Activated naive CD4-positive, alpha-beta T cell treated with anti-CD3 and anti-CD28 coated beads for 36 hours (primary cell): ENCODE measurements at regions of chr1 and their contacts with region 1.

Region 1: DNA sequence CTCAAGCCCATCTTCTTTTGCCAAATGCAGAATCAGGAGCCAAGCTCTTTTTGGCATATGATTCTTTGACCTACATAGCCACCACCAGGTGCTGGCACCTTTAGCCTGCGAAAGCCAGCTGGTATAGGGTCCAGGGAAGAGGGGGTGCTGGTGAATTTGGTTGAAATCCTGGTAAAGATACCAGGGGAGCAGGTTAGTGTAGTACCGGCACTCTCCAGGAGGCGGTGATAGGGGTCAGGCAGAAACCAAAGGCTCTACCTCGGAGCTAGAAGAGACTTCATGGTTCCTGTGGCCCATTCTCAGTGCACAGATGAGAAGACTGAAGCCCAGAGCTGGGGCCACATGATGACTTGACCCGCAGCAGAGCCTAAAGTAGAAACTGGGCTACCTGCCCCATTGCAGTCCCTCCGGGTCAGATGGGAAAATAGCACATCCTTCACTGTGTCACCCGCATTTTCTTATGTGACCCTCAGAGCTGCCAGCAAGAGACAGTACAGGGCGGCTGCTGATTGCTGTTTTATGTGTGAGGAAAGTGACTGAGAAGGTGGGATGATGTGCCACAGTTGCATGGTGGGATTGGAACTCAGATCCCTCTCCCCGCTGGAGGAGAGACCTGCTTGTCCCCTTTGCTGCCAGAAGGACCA is 36.0 kb upstream of the IL19 start:
- DNase-seq: peak; percentile 88
- H3K4me3 Mint-ChIP-seq: no peak overlapping the region
- H3K27ac Mint-ChIP-seq: no peak overlapping the region
- H3K4me1 Mint-ChIP-seq: peaks cover 53% of the 10 kb centered on the region
- H3K27me3 Mint-ChIP-seq: no peaks in the 10 kb centered on the region

Region 2: GRCh38 chr1:206459703-206460102 is 274.9 kb before region 1 on chr1:
- CTCF ChIA-PET with region 1: no interaction called
- intact Hi-C with region 1: no loop called
- DNase-seq: no peak
- H3K4me3 Mint-ChIP-seq: no peak overlapping the region
- H3K27ac Mint-ChIP-seq: no peak overlapping the region
- H3K4me1 Mint-ChIP-seq: peaks cover 25% of the 10 kb centered on the region
- H3K27me3 Mint-ChIP-seq: no peaks in the 10 kb centered on the region

Region 3: DNA sequence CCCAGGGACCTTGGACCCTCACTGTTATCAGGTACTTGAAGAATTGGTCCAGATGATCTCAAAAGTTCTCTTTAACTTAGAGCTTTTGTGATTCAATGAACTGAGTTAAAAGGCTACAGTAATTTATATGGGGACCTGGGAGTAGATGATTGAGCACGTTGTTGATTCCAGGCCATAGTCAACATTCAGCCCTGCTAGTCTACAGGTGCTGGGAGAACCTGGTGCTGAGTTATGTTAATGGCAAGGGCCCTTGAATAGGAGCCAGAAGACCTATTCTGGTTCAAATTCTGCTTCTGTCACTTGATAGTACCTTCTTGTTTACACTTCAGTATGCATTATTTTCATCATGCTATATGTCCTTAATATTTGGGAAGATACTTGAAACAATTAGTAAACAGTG is 88.1 kb before region 1 on chr1:
- CTCF ChIA-PET with region 1: no interaction called
- intact Hi-C with region 1: no loop called
- DNase-seq: no peak
- H3K4me3 Mint-ChIP-seq: no peak overlapping the region
- H3K27ac Mint-ChIP-seq: no peak overlapping the region
- H3K4me1 Mint-ChIP-seq: peaks cover 3% of the 10 kb centered on the region
- H3K27me3 Mint-ChIP-seq: peaks cover 2% of the 10 kb centered on the region

Region 4: DNA sequence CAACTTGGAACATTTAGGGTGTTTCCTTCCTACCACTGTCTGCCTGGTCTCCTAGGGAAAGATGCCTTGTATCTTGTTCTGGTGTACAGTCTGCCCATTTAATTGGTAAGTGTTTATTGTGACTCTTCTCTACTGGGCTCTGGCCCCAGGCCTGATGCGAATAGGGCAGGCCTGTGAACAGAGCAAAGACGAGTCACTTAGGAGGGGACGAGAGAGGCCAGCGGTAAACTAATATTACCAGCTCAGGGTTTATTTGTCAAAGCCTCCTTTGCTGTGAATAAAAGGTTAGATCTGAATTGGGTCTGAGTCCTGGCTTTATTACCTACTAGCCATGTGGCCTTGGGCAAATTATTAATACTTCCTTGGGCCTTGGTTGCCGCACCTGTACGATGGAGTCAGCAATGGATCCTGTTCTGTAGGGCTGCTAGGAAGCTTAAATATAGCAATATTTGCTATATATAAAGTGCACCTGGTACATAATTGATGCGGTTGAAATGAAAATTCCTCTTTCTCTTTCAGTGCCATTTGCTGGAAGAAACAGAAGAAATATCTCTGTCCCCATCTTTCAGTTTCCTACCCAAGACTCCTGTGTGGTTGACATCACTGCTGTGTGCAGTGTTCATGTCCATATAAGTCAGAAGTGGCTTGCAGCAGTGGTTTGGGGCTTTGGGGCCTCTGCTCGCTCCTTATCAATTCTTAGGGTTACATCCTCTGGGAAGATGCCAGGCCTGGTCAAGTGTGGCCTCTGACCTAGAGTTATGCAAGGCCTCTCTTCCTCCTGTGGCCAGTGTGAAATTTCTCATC is 17.5 kb before region 1 on chr1:
- CTCF ChIA-PET with region 1: interaction called, 49 read pairs
- intact Hi-C with region 1: no loop called
- DNase-seq: peak; percentile 37
- H3K4me3 Mint-ChIP-seq: no peak overlapping the region
- H3K27ac Mint-ChIP-seq: peak overlapping the region; percentile 22
- H3K4me1 Mint-ChIP-seq: peaks cover 65% of the 10 kb centered on the region
- H3K27me3 Mint-ChIP-seq: no peaks in the 10 kb centered on the region

Region 5: GRCh38 chr1:206797534-206798383 is 63.1 kb after region 1 on chr1:
- CTCF ChIA-PET with region 1: interaction called, 232 read pairs
- intact Hi-C with region 1: no loop called
- DNase-seq: no peak
- H3K4me3 Mint-ChIP-seq: no peak overlapping the region
- H3K27ac Mint-ChIP-seq: no peak overlapping the region
- H3K4me1 Mint-ChIP-seq: peaks cover 40% of the 10 kb centered on the region
- H3K27me3 Mint-ChIP-seq: peaks cover 7% of the 10 kb centered on the region

Region 6: GRCh38 chr1:206865013-206865671 is 130.5 kb after region 1 on chr1 and contains the start of gene IL20:
- CTCF ChIA-PET with region 1: interaction called, 5 read pairs
- intact Hi-C with region 1: loop called (anchors 2 kb)
- DNase-seq: peak; percentile 98
- H3K4me3 Mint-ChIP-seq: no peak within 1 kb of the TSS
- H3K27ac Mint-ChIP-seq: no peak within 1 kb of the TSS
- H3K4me1 Mint-ChIP-seq: peaks cover 30% of the 10 kb centered on the region
- H3K27me3 Mint-ChIP-seq: no peaks in the 10 kb centered on the region
- total RNA-seq, gene IL20: 0.31 TPM in 1 of 2 experiments, not detected in the other

Region 7: GRCh38 chr1:206935491-206936067 is 201.0 kb after region 1 on chr1:
- CTCF ChIA-PET with region 1: interaction called, 43 read pairs
- intact Hi-C with region 1: no loop called
- DNase-seq: peak; percentile 66
- H3K4me3 Mint-ChIP-seq: no peak overlapping the region
- H3K27ac Mint-ChIP-seq: no peak overlapping the region
- H3K4me1 Mint-ChIP-seq: peaks cover 18% of the 10 kb centered on the region
- H3K27me3 Mint-ChIP-seq: no peaks in the 10 kb centered on the region

Region 8: GRCh38 chr1:207499573-207499972 is 765.0 kb after region 1 on chr1:
- CTCF ChIA-PET with region 1: no interaction called
- intact Hi-C with region 1: loop called (anchors 1 kb)
- DNase-seq: peak; percentile 88
- H3K4me3 Mint-ChIP-seq: no peak overlapping the region
- H3K27ac Mint-ChIP-seq: peak overlapping the region; percentile 51
- H3K4me1 Mint-ChIP-seq: peaks cover 26% of the 10 kb centered on the region
- H3K27me3 Mint-ChIP-seq: peaks cover 25% of the 10 kb centered on the region